PC-9 (cell line): ENCODE measurements at regions of chr2 and their contacts with region 1.

Region 1: DNA sequence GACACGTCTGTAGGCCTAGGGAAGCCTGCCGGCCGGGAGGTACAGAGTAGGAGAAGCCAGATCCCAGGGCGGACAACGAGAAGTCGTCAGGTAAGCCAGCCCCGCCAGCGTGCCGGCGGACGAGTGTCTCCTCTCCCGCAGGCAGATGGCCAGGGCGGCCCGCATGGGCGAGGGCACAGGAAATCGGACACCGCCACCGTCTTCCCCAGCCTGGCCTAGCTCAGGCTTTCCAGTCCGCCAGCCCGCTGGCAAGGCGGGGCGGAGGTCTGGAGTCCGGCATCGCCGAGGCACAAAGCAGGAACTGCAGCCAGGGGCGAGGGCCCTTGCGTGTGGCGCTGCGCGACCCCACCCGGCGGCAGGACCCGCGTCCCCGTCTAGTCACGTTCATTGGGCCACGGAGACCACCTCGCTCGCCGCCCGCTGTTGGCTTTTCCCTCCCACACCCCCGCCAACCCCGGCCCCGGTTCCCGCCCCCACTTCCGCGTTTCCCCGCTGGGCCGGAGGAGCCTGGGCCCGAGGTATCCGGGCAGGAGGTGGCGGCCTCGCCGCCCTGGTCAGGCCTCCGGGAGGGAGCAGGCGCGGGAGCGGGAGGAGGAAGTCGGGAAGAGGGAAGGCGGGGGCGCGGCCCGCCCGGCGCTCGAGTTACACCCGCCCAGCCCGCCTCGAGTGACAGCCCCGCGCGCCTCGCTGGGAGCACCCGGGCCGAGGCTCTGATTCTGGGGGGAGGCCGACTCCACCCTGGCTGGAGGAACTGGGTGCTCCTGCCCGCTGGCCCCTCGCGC is at the start of gene GPD2:
- DNase-seq: peak; percentile 74 to 88
- H3K4me3 ChIP-seq: peak within 1 kb of the TSS; percentile 65
- H3K27ac ChIP-seq: peak within 1 kb of the TSS; percentile 95
- H3K4me1 ChIP-seq: peaks cover 55% of the 10 kb centered on the region
- H3K27me3 ChIP-seq: no peaks in the 10 kb centered on the region
- CTCF ChIP-seq: no peak
- total RNA-seq, gene GPD2: 47.1 and 67.8 TPM in 2 replicates

Region 2: DNA sequence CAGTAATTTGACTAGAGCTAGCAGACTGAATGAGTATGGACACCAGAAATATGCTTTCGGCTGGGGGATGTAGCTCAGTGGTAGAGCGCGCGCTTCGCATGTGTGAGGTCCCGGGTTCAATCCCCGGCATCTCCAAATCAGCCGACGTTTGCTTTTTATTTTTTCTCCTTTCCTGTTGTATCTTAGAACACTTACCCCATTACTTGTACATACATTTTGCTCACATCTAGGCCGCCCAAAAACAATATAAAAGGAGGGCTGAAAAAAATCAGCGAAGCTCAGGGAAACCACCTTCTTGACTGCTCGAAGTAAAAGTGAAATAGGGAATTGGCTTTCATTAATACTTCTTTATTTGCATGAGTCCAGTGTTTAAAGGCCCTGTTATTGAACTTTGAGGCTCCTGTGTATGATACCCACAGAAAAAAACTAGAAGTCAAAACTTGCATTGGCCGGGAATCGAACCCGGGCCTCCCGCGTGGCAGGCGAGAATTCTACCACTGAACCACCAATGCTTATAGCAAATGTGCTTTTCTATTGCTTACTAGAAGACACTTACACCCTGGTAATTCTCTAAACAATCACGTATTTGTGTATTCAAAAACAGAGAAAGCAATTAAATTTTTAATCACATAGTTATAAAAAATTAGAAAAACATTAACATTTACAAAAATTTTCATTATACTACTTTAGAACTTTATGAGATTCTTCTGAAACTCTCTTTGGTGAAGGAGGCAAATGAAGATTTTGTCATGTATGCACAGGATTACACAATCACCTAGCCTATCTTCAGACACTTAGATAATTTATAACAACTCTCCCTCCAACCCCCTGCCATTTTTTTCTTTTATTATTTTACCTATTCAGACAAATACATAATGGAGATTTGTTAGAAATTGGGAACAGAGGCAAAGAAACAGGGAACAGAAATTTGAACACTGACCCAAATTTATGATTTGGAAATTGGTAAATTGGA is 34.9 kb before region 1 on chr2:
- CTCF ChIA-PET with region 1: interaction called, 3 read pairs
- POLR2A ChIA-PET with region 1: interaction called, 4 read pairs
- intact Hi-C with region 1: loop called (anchors 1 kb)
- DNase-seq: peak; percentile 60 to 63
- H3K4me3 ChIP-seq: peak overlapping the region; percentile 84
- H3K27ac ChIP-seq: peak overlapping the region; percentile 83
- H3K4me1 ChIP-seq: peaks cover 26% of the 10 kb centered on the region
- H3K27me3 ChIP-seq: no peaks in the 10 kb centered on the region
- CTCF ChIP-seq: no peak

Region 3: DNA sequence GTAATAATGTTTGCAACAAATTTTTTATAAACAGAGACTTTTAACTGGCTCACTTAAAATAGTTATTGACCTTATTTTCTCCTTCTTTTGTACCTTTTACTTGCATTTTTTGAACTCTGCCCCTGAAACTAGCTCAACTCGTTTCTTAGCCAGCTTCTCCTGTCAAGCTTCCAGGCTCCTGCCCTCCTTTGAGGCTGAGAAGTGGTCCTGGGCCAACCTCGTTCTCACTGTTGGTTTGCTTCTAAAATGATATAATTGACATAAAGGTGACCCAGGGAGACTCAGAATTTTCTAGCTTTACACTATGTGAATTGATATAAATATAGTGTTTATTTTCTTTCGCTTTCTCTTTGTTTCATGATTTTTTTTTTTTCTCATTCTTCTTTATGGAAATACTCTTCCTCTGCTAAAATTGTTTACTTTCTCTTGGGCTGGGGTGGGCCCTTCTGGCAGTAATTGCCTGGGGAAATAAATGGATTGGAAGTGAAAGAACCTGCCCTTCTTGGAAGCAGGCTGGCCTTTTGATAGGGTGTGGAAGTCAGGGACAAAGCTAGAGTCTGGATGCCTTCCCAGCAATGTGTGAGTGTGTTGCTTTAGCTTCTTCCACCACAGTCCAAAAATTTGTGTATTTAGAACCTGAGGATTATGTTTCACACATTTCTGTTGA is 31.0 kb after region 1 on chr2:
- CTCF ChIA-PET with region 1: interaction called, 6 read pairs
- POLR2A ChIA-PET with region 1: interaction called, 3 read pairs
- intact Hi-C with region 1: loop called (anchors 2 kb)
- DNase-seq: peak in 1 of 2 experiments; percentile 27
- H3K4me3 ChIP-seq: no peak overlapping the region
- H3K27ac ChIP-seq: no peak overlapping the region
- H3K4me1 ChIP-seq: no peaks in the 10 kb centered on the region
- H3K27me3 ChIP-seq: no peaks in the 10 kb centered on the region
- CTCF ChIP-seq: no peak